Astrocyte of the cerebellum (primary cell): ENCODE measurements at regions of chr5 and their contacts with region 1.

Region 1: GRCh38 chr5:147384346-147385193 is 125.3 kb downstream of the DPYSL3 start:
- DNase-seq: no peak
- H3K4me3 ChIP-seq: no peak overlapping the region
- CTCF ChIP-seq: no peak

Region 2: GRCh38 chr5:147437161-147437596 is 52.6 kb after region 1 on chr5:
- in situ Hi-C with region 1: loop called (anchors 5 kb)
- DNase-seq: peak; percentile 87
- H3K4me3 ChIP-seq: no peak overlapping the region
- CTCF ChIP-seq: no peak